Mammary epithelial cell (primary cell): ENCODE measurements at regions of chr1 and their contacts with region 1.

Region 1: DNA sequence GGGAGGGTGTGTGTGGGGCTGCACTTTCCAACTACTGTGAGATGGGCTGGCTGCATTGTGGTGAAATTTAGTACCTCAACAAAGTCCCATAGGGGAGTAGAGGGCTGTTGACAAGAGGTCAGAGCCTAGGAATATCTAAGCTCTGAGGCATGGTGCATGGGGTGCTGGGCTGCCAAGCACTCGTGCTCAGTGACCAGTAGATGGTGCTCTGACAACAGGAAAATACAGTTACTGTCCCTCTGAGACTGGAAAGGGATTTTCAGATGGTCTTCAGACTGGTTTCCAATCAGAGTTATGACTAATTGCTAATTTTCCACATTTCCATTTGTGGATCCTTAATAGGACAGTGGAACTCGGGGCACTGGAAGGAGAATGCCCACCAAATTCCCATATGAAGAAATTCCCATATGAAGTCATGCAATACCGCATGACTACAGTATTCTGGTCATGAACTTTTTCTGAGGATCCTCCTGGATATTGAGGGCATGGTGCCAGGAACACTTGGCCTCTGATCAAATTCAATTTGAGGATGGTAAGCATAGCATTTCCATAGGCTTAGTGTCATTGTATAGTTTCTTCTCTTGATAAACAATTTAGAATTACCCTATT is 4.1 kb upstream of the CACNA1E start:
- DNase-seq: peak; percentile 47
- H3K4me3 ChIP-seq: no peak overlapping the region
- H3K27ac ChIP-seq: no peak overlapping the region
- H3K4me1 ChIP-seq: no peaks in the 10 kb centered on the region
- H3K27me3 ChIP-seq: peaks cover 17% of the 10 kb centered on the region
- CTCF ChIP-seq: peak; percentile 90 to 95

Region 2: DNA sequence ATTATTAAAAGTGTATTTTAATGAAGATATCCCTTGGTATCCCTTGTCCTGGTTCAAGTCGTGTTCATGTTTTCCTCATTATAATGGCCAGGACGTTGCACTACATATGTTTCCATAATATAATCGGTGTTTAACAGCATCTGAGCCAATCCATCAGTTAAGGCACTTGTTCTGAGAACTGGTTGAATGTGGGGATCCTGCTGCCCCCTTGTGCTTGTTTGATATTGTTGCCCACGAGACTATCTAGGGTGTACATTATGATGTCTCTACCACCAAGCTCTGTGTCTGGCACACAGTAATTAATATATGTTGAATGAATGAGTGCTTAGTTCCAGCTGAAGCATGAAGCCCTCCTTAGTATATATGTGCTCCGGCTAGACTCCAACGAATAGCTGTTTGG is 197.0 kb after region 1 on chr1:
- CTCF ChIA-PET with region 1: interaction called, 4 read pairs
- dilution Hi-C with region 1: no loop called
- in situ Hi-C with region 1: loop called (anchors 5 to 10 kb)
- intact Hi-C with region 1: loop called (anchors 1 kb)
- DNase-seq: peak; percentile 26
- H3K4me3 ChIP-seq: no peak overlapping the region
- H3K27ac ChIP-seq: no peak overlapping the region
- H3K4me1 ChIP-seq: no peaks in the 10 kb centered on the region
- H3K27me3 ChIP-seq: no peaks in the 10 kb centered on the region
- CTCF ChIP-seq: peak; percentile 42 to 62

Region 3: DNA sequence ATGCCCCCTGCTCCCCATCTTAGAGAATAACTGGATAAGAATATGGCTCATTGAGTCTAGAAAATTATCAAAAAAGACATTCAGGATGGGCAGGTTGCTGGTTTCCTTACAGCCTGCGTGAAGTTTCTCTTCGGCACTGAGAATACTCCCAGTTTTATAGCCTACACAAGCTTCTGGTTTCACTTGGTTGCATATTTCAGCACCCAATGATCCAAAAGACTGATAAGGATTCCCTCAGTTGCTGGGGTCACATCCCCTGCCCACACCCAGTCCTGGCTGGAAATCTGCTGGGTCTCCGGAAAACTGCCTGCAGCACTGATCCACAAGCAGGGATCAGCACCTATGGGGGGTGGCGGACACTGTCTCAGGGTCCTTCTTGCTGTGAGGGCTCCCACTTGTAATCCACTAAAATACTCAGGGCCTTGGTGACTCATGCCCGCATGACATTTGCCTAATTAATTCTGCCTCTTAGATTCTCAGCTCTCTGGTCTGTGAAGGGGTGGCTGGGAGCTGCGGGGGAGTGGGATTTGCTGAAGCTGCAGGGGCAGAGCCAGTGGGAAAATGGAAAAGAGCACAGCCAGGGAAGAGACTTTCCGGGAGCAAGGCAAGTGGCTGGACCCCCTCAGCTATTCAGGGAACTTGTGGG is 439.8 kb after region 1 on chr1:
- CTCF ChIA-PET with region 1: no interaction called
- dilution Hi-C with region 1: no loop called
- in situ Hi-C with region 1: no loop called
- intact Hi-C with region 1: loop called (anchors 5 kb)
- DNase-seq: no peak
- H3K4me3 ChIP-seq: no peak overlapping the region
- H3K27ac ChIP-seq: no peak overlapping the region
- H3K4me1 ChIP-seq: no peaks in the 10 kb centered on the region
- H3K27me3 ChIP-seq: no peaks in the 10 kb centered on the region
- CTCF ChIP-seq: no peak

Region 4: DNA sequence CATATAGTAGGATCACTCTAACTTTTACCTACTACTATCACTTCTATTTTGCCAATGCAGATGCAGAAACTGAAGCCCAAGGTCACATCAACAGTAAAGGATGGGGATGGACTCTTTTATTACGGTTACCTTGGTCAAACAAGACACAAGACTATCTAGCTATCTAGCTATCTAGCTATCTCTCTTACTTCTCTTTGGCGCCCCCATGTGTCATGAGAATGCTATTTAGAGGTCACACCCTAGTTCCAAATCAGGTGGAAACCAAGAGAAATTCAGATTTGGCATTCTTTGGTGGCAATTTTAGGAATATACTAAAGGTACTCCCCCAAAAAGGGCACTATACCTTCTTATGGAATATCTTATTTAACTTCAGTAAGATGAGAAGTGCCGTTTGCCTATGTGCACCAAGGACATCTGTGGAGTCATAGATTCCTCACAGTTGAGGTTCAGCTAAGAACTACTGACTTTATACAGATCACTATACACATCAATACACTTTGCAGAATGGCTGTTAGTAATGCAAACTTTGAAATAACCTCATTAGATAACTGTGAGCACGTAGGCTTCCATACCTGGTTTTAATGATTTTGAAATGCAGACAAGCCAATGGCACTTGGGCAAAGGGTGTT is 575.6 kb after region 1 on chr1:
- CTCF ChIA-PET with region 1: interaction called, 5 read pairs
- dilution Hi-C with region 1: no loop called
- in situ Hi-C with region 1: loop called (anchors 25 kb)
- intact Hi-C with region 1: loop called (anchors 1 kb)
- DNase-seq: peak; percentile 38
- H3K4me3 ChIP-seq: no peak overlapping the region
- H3K27ac ChIP-seq: no peak overlapping the region
- H3K4me1 ChIP-seq: no peaks in the 10 kb centered on the region
- H3K27me3 ChIP-seq: no peaks in the 10 kb centered on the region
- CTCF ChIP-seq: peak; percentile 60

Region 5: GRCh38 chr1:182391362-182392044 is 912.3 kb after region 1 on chr1 and contains the start of gene GLUL:
- CTCF ChIA-PET with region 1: no interaction called
- dilution Hi-C with region 1: no loop called
- in situ Hi-C with region 1: no loop called
- intact Hi-C with region 1: loop called (anchors 10 kb)
- DNase-seq: peak; percentile 88
- H3K4me3 ChIP-seq: peak within 1 kb of the TSS; percentile 75 to 95 (median 82)
- H3K27ac ChIP-seq: peak within 1 kb of the TSS; percentile 51
- H3K4me1 ChIP-seq: peaks cover 9% of the 10 kb centered on the region
- H3K27me3 ChIP-seq: no peaks in the 10 kb centered on the region
- CTCF ChIP-seq: peak in 1 of 2 donors; percentile 17
- total RNA-seq, gene GLUL: 400 to 471 TPM